Heart right ventricle (tissue), 16 donors: ENCODE measurements at regions of chr19 and their contacts with region 1.

Region 1: DNA sequence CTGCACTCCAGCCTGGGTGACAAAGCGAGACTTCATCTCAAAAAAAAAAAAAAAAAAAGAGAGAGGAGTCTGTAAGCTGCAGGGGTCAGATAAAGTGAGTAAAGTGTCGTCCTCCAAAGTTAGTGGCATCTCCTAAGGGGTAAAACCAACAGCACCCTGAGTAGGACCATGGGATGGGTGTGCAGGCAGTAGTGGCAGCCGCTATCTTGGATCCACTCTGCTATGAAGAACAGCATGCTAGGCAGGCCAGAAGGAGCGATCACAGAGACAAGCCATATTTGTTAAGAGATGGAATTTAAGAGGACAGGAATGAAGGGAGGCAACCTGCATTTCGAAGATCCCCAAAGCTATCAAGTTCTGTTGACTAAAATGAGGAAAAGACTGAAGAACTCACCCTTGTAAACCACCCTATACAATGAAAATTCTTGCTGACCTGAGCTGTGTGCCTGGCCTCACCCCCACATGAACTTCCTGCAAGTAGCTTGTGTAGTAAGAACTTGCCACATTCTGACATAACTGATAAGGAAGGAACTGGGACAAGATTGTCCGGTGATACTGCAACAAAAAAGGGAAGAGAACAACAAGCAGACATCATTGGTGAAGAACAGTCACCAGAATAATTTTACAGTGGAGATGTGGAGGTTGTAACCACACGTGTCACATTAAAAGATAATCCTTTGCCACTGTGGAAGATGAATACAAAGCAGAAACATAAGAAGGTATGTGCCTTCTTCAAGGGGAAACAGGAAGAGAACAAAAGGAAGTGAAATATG is 16.2 kb downstream of the DPY19L3 start:
- DNase-seq: no peak
- ATAC-seq: peak in 3 of 8 donors; percentile 47 to 67 (median 47)
- H3K4me3 ChIP-seq: no peak overlapping the region
- H3K27ac ChIP-seq: peak overlapping the region in 1 of 10 donors; percentile 49
- H3K4me1 ChIP-seq: peaks cover 0 to 18% (median 0%) of the 10 kb centered on the region in 9 donors
- H3K27me3 ChIP-seq: no peaks in the 10 kb centered on the region
- CTCF ChIP-seq: no peak

Region 2: GRCh38 chr19:32373585-32374295 is 48.0 kb before region 1 on chr19:
- intact Hi-C with region 1: loop called in 1 of 10 experiments (anchors 1 kb)
- DNase-seq: peak in 1 of 2 donors; percentile 42
- ATAC-seq: peak; percentile 55 to 99 (median 95)
- H3K4me3 ChIP-seq: no peak overlapping the region
- H3K27ac ChIP-seq: peak overlapping the region in 8 of 10 donors; percentile 42 to 73 (median 62)
- H3K4me1 ChIP-seq: peaks cover 0 to 28% (median 7%) of the 10 kb centered on the region in 9 donors
- H3K27me3 ChIP-seq: peaks cover 0 to 48% (median 0%) of the 10 kb centered on the region in 7 donors
- CTCF ChIP-seq: no peak